ENCODE measurements at regions of chr4 and their contacts with region 1.

Region 1: GRCh38 chr4:173420324-173420752 is 21.4 kb upstream of the SCRG1 start:
- DNase-seq: no peak
- ATAC-seq: 0 out of 2 replicates have a peak, but pooled peaks have one; percentile 36
- H3K4me3 Mint-ChIP-seq: no peak overlapping the region
- H3K27ac Mint-ChIP-seq: no peak overlapping the region
- H3K4me1 Mint-ChIP-seq: no peaks in the 10 kb centered on the region
- H3K27me3 Mint-ChIP-seq: no peaks in the 10 kb centered on the region
- CTCF ChIP-seq: no peak

Region 2: DNA sequence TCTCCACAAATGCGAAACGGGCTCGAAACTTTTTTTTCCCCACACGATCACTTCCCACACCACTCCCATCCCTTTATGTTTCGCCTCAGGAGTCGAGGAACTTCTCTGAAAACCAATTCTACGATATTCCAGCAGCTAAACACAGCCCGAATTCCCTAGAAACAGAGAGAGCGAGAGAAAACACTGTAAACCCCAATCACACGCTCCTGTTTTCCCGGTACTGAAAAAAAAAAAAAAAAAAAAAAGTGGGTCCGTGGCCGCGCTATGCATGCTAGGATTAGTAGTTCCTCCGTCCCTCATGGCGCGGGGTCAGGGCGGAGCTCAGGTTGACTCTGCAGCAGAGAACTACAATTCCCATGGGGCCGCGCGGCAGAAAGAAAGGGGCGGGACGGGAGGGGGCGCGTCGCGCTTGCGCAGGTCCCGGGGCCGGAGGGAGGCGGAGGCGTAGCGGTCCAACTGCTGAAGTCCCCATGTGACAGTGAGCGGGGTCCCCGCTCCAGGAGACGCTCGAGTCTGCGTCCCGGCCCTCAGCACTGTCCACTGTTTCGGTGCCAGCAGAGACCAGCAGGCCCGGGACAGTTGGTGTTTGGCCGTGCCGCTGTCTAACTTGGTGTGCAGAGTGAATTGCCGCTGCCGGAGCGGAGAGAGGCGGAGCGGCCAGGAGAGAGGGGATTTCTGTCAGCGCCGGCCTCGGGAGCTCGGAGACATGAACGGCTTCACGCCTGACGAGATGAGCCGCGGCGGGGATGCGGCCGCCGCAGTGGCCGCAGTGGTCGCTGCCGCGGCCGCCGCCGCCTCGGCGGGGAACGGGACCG is 49.7 kb before region 1 on chr4 and contains the start of gene SAP30:
- CTCF ChIA-PET with region 1: interaction called, 25 read pairs
- POLR2A ChIA-PET with region 1: interaction called, 3 read pairs
- DNase-seq: peak; percentile 98
- ATAC-seq: peak; percentile 86
- H3K4me3 Mint-ChIP-seq: peak within 1 kb of the TSS; percentile 100
- H3K27ac Mint-ChIP-seq: peak within 1 kb of the TSS; percentile 100
- H3K4me1 Mint-ChIP-seq: peaks cover 22% of the 10 kb centered on the region
- H3K27me3 Mint-ChIP-seq: peaks cover 7% of the 10 kb centered on the region
- CTCF ChIP-seq: no peak
- total RNA-seq, gene SAP30: 20.0 to 21.1 TPM (median 20.0 TPM) in 3 replicates

Region 3: GRCh38 chr4:173450281-173450680 is 29.9 kb after region 1 on chr4:
- CTCF ChIA-PET with region 1: interaction called, 11 read pairs
- POLR2A ChIA-PET with region 1: no interaction called
- DNase-seq: no peak
- ATAC-seq: no peak
- H3K4me3 Mint-ChIP-seq: no peak overlapping the region
- H3K27ac Mint-ChIP-seq: no peak overlapping the region
- H3K4me1 Mint-ChIP-seq: no peaks in the 10 kb centered on the region
- H3K27me3 Mint-ChIP-seq: no peaks in the 10 kb centered on the region; the same call in 1 of the 2 replicates
- CTCF ChIP-seq: no peak

Region 4: DNA sequence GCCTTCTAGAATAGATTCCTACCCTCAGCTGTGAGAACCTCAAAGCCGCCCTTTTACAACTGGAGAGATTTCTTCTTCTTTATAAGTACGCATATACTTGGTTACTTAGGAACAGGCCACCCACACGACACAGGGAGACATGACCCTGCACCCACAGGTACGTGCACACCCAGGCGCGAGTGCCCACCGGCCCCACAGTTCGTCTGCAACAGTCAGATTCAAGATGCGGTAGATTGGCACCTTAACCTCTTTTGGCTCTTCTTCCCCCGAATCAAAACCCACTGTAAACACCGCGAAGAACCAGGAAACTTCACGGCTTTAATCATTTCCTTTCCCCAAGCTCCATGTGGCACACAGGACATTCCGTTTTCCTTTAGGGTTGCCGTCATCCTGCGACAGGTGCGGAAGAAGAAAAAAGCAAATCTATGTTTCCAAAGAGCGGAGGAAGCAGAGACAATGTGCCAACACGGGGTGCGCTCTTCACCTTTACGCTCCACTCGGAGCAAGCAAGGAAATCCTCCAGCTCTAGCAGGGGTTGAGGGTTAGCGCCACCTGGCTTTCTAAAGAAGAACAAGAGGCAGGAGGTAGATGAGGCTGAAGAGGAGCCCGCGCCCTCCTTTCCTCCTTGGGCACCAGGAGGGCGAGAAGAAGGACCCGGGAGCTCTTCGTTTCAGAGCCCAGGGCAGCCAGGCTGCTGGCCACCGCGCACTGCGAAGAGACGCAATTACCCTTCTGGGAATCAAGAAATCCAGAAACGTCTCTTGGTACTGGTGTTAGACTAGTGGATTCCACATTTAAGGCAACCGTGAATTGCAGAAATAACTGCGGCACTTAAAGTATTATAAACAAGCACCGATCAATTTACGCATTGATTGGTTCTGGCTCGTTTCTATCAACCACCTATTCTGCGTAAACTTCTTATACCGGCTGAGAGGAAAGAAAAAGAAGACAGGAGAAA is 74.0 kb after region 1 on chr4:
- CTCF ChIA-PET with region 1: interaction called, 30 read pairs
- POLR2A ChIA-PET with region 1: no interaction called
- DNase-seq: peak; percentile 78
- ATAC-seq: peak; percentile 95
- H3K4me3 Mint-ChIP-seq: peak overlapping the region; percentile 75
- H3K27ac Mint-ChIP-seq: no peak overlapping the region
- H3K4me1 Mint-ChIP-seq: peaks cover 34% of the 10 kb centered on the region
- H3K27me3 Mint-ChIP-seq: peaks cover 81% of the 10 kb centered on the region
- CTCF ChIP-seq: peak; percentile 74

Region 5: DNA sequence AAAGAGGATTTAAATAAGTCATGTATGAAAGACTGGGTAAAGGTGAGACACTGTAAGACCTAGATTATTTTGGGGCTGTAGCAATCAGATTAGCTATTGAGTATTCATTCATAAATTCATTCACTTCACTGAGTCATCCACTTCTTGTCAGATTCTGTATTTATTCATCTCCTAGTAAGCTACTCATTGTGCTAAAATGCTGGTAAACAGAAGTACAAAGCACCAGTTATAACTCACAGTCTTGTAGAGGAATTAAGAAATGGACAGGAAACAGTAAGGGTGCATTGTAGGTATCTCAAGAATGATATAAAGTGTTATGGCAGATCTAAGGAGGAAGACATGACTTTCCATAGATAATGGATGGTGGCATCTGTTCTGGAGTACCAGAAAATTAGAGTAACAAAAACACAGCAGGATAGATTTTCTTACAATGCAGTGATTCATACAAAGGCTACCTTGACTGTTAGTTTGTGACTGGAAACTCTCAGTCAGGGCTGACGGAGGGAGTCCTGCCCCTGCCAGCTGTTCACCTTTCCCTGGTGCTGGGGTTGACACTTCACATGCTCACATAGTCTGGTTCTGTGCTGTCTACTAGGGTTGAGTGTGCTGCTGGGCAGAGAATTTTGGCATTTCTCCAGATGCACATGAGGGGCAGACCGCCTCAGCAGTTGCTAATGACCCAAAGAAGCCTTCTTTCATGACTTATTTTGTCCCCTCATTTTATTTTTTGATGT is 136.2 kb after region 1 on chr4:
- CTCF ChIA-PET with region 1: no interaction called
- POLR2A ChIA-PET with region 1: no interaction called
- DNase-seq: no peak
- ATAC-seq: peak; percentile 80
- H3K4me3 Mint-ChIP-seq: no peak overlapping the region
- H3K27ac Mint-ChIP-seq: no peak overlapping the region
- H3K4me1 Mint-ChIP-seq: peaks cover 10% of the 10 kb centered on the region
- H3K27me3 Mint-ChIP-seq: no peaks in the 10 kb centered on the region; the same call in 1 of the 2 replicates
- CTCF ChIP-seq: no peak

Measured in WTC11 (cell line).